ENCODE measurements at regions of chr21 and their contacts with region 1.

Region 1: GRCh38 chr21:37009740-37010341 is 3.3 kb downstream of the RIPPLY3 start:
- DNase-seq: peak; percentile 54
- ATAC-seq: peak; percentile 99
- H3K4me3 ChIP-seq: peak overlapping the region; percentile 37; the same call in 1 of the 2 replicates
- H3K27ac ChIP-seq: no peak overlapping the region
- H3K4me1 ChIP-seq: no peaks in the 10 kb centered on the region; the same call in 1 of the 2 replicates
- H3K27me3 ChIP-seq: peaks cover 2 to 13% of the 10 kb centered on the region in 2 experiments; a peak in 2 of 4 replicates
- CTCF ChIP-seq: peak; percentile 85 to 87 (median 87)
- EP300 ChIP-seq: 0 out of 4 replicates have a peak, but pooled peaks of 1 of the 2 experiments have one; percentile 6
- POLR2A ChIP-seq: no peak
- RAD21 ChIP-seq: peak; percentile 69

Region 2: DNA sequence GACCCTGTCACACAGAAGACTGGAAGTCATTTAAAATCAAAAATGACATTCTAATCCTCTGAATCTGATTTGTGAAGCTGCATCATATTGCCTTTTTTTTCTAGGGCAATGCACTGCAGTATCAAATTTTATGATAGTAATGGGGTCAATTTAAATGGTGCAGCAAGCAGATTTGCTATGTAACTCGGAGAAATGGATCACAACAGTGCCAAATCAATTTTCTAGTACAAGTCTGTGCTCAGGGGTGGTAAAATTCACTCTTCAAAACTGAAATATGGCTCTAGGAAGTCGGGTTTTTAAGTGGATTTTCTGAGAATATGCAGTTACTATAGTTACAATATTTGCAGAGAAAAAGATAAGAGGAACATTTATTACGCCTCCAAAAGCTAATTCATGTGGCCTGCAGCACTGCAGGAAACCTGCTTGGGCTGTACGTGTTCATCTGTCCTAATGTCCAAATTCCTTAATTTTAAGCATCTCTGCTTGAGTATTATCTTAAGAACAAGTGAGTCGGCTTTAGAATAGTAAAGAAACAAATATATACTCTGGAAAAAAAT is 74.9 kb before region 1 on chr21:
- CTCF ChIA-PET with region 1: interaction called, 15 read pairs
- POLR2A ChIA-PET with region 1: no interaction called
- RAD21 ChIA-PET with region 1: interaction called, 3 read pairs
- SMC1A ChIA-PET with region 1: interaction called, 3 read pairs
- in situ Hi-C with region 1: no loop called
- intact Hi-C with region 1: loop called (anchors 2 kb)
- DNase-seq: no peak
- ATAC-seq: no peak
- H3K4me3 ChIP-seq: no peak overlapping the region
- H3K27ac ChIP-seq: no peak overlapping the region
- H3K4me1 ChIP-seq: no peaks in the 10 kb centered on the region
- H3K27me3 ChIP-seq: no peaks in the 10 kb centered on the region
- CTCF ChIP-seq: no peak
- EP300 ChIP-seq: no peak
- POLR2A ChIP-seq: no peak
- RAD21 ChIP-seq: no peak

Region 3: DNA sequence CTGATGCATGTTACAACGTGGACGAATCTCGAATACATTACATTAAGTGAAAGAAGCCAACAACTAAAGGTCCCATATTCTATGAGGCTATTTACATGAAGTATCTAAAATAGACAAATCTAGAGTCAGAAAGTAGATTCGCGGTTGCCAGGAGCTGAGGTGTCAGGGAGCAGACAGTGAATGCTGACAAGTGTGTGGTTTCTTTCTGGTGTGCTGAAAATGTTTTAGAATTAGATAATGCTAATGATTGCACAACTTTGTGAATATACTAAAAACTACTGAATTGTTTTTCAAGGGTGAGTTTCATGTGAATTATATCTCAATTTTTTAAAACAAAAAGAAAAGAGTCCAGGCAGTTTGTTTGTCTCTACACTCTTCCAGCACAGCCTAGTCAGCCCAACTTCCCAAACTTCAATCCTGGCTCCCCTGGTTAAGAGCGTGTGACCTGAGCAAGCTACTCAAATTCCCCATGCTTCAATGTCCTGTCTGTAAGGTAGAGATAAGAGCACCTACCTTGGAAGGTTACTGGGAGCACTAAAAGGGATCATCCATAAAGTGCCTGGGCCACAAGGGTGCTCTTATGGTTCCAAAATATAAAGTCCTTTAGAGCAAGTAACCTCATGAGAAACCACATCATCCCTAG is 64.2 kb before region 1 on chr21:
- CTCF ChIA-PET with region 1: interaction called, 15 read pairs
- POLR2A ChIA-PET with region 1: no interaction called
- RAD21 ChIA-PET with region 1: interaction called, 3 read pairs
- SMC1A ChIA-PET with region 1: interaction called, 3 read pairs
- in situ Hi-C with region 1: no loop called
- intact Hi-C with region 1: no loop called
- DNase-seq: no peak
- ATAC-seq: no peak
- H3K4me3 ChIP-seq: no peak overlapping the region
- H3K27ac ChIP-seq: no peak overlapping the region
- H3K4me1 ChIP-seq: no peaks in the 10 kb centered on the region
- H3K27me3 ChIP-seq: no peaks in the 10 kb centered on the region
- CTCF ChIP-seq: no peak
- EP300 ChIP-seq: no peak
- POLR2A ChIP-seq: no peak
- RAD21 ChIP-seq: no peak

Region 4: GRCh38 chr21:36966066-36966820 is 43.6 kb before region 1 on chr21 and contains the start of gene HLCS:
- CTCF ChIA-PET with region 1: interaction called, 10 read pairs
- POLR2A ChIA-PET with region 1: interaction called, 5 read pairs
- RAD21 ChIA-PET with region 1: no interaction called
- SMC1A ChIA-PET with region 1: no interaction called
- in situ Hi-C with region 1: no loop called
- intact Hi-C with region 1: no loop called
- DNase-seq: no peak
- ATAC-seq: peak; percentile 84
- H3K4me3 ChIP-seq: peak within 1 kb of the TSS; percentile 88
- H3K27ac ChIP-seq: peak within 1 kb of the TSS; percentile 49
- H3K4me1 ChIP-seq: peaks cover 15% of the 10 kb centered on the region
- H3K27me3 ChIP-seq: no peaks in the 10 kb centered on the region
- CTCF ChIP-seq: peak; percentile 10 to 40 (median 26); a peak in 3 of 6 replicates
- EP300 ChIP-seq: no peak
- POLR2A ChIP-seq: peak; percentile 87
- RAD21 ChIP-seq: no peak
- polyA plus RNA-seq, gene HLCS: 1.5 to 1.8 TPM

Region 5: DNA sequence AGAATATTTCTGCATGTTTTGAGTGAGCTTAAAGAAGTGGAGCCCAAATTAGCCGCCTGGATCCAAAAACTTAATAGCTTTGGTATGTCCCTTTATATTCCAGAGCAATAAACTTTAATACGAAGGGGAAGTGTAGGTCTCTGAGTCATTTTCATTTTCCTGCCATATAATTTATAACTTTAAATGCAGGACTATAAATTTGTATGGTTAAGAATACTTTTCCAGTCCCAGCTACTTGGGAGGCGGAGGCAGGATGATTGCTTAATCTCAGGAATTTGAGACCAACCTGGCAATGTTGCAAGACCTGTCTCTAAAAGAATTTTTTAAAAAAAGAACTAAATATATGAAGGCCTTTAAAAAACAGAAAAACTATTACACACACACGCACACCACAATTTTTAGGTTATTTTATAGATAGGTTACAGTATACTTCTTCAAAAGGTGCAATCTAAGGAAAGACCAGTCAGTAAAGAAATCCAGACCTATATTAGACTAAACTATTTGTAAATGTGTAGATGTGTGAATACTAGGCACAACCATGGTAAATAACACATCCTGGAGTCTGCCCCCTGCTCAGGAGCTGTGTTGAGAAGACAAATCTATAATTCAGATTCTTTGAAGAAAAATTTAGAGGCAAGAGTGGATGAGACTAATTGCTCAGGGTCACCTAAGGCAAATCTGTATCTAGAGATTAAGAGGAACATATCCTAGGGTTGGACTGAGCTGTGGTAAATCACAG is 143.5 kb after region 1 on chr21:
- CTCF ChIA-PET with region 1: no interaction called
- POLR2A ChIA-PET with region 1: no interaction called
- RAD21 ChIA-PET with region 1: no interaction called
- SMC1A ChIA-PET with region 1: no interaction called
- in situ Hi-C with region 1: no loop called
- intact Hi-C with region 1: no loop called
- DNase-seq: no peak
- ATAC-seq: no peak
- H3K4me3 ChIP-seq: no peak overlapping the region
- H3K27ac ChIP-seq: no peak overlapping the region
- H3K4me1 ChIP-seq: no peaks in the 10 kb centered on the region
- H3K27me3 ChIP-seq: no peaks in the 10 kb centered on the region
- CTCF ChIP-seq: no peak
- EP300 ChIP-seq: no peak
- POLR2A ChIP-seq: no peak
- RAD21 ChIP-seq: no peak

Measured in GM12878 (cell line).